GM12878 (cell line): ENCODE measurements at regions of chr1 and their contacts with region 1.

Region 1: DNA sequence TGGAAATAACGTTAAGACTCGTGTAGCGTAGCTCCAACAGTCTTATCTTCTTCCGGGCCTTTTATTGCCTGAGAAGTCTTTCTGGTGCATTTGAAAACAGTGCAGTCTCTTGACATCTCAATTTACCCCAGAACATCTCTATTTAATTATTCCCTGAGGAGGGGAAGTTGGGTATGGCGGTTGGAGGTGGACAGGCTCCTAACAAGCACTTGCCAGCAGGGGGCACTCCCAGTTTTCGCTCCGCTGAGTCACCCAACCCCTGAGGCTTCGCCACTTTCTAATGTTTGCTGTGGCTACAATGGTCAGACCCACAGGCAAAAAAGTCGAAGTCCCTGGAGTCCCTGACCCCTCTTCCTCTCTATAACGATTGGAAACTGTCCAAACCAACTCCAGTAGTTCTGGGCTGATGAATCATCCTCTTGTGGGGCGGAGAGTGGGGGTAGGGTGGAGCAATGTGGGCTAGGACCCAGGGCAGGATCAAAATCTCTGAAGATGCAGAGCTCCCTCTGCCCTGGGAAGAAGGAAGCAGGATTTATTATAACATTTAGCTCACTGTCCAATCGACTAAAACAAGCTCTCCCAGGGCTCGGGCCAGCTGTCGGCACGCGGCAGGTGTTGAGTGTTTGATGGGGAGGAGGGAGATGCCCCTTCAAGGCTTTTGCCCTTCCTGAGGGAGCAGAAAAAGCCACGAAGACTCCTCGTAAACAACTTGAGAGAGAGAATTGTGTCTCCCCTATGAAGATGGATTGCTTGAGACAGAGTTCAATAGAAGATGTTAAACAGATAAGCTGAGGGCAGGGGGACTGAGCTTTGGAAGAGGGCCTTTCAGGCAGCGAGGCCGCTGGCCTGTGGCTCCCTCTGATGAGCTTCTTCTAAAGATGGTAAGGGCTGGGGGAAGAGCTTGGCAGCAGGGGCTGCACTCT is 85.7 kb downstream of the BRINP2 start:
- DNase-seq: no peak
- ATAC-seq: peak; percentile 84
- H3K4me3 ChIP-seq: no peak overlapping the region
- H3K27ac ChIP-seq: no peak overlapping the region
- H3K4me1 ChIP-seq: no peaks in the 10 kb centered on the region
- H3K27me3 ChIP-seq: no peaks in the 10 kb centered on the region
- CTCF ChIP-seq: peak; percentile 40 to 55 (median 41); a peak in 5 of 6 replicates
- EP300 ChIP-seq: no peak
- POLR2A ChIP-seq: no peak
- RAD21 ChIP-seq: peak; percentile 42

Region 2: DNA sequence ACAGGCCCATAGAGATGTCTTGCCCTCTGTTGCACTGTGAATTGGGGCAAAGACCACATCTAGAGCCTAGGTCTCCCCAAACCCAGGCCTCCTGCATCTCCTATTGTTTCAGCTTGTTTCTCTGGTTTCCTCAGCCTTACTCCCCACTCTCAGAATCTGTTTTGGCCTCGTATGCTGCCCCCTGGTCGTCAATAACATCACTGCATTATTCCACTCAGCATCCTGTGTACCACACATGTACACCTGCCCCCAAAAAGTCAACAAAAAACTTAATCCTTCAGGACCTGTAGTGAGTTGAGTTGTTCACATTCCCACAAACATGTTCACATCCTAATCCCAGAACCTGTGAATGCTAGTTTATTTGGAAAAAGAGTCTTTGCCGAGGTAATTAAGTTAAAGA is 99.2 kb after region 1 on chr1:
- CTCF ChIA-PET with region 1: interaction called, 17 read pairs
- POLR2A ChIA-PET with region 1: no interaction called
- RAD21 ChIA-PET with region 1: interaction called, 11 read pairs
- SMC1A ChIA-PET with region 1: interaction called, 3 read pairs
- in situ Hi-C with region 1: no loop called
- intact Hi-C with region 1: no loop called
- DNase-seq: no peak
- ATAC-seq: peak; percentile 80
- H3K4me3 ChIP-seq: no peak overlapping the region
- H3K27ac ChIP-seq: no peak overlapping the region
- H3K4me1 ChIP-seq: no peaks in the 10 kb centered on the region
- H3K27me3 ChIP-seq: no peaks in the 10 kb centered on the region
- CTCF ChIP-seq: peak; percentile 28 to 37 (median 32); a peak in 4 of 6 replicates
- EP300 ChIP-seq: no peak
- POLR2A ChIP-seq: no peak
- RAD21 ChIP-seq: peak; percentile 38; the same call in 1 of the 2 replicates

Region 3: DNA sequence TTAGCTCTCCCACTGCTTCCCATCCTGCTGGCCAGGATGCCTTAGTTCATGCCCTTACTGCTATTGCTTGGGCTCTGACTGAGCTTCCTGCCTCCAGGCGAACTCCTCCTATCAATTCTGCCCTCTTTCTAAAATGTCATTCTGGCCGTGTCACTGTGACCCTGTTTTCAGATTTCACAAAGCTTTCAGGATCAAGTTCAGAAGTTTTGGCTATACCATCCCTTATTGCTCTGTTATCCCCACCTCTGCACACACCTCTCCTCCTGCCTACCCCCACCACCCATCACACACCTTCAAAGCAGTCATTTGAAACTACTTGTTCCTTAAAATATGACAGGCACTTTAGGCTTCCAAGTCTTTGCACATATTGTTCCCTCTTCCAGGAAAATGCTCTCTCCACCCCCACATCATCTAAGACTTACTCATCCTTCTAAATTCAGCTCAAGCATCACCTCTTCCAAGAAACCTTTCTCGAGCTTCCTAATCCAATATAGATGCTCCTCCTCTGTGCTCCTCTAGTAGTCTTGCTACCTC is 192.4 kb after region 1 on chr1:
- CTCF ChIA-PET with region 1: no interaction called
- POLR2A ChIA-PET with region 1: no interaction called
- RAD21 ChIA-PET with region 1: no interaction called
- SMC1A ChIA-PET with region 1: no interaction called
- in situ Hi-C with region 1: no loop called
- intact Hi-C with region 1: no loop called
- DNase-seq: no peak
- ATAC-seq: no peak
- H3K4me3 ChIP-seq: no peak overlapping the region
- H3K27ac ChIP-seq: no peak overlapping the region
- H3K4me1 ChIP-seq: no peaks in the 10 kb centered on the region
- H3K27me3 ChIP-seq: no peaks in the 10 kb centered on the region
- CTCF ChIP-seq: no peak
- EP300 ChIP-seq: no peak
- POLR2A ChIP-seq: no peak
- RAD21 ChIP-seq: no peak

Region 4: DNA sequence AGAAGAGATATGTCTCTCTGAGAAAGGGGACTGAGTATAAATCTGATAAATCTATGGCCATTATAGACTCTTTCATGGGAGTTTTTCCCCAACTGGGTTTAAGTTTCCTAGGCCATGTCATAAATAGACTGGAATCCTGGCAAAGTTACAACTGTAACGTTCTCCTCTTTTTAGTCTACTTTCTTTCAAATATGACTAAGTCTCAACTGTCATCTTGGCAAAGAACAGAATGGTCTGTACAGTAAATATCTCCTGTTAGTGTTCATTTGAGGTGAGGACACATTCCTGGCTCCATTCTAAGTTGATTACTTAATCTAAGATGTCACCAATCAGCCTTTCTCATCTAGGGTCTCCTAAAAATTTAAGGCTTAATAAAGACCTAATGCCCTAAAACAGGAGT is 214.8 kb after region 1 on chr1:
- CTCF ChIA-PET with region 1: no interaction called
- POLR2A ChIA-PET with region 1: no interaction called
- RAD21 ChIA-PET with region 1: no interaction called
- SMC1A ChIA-PET with region 1: no interaction called
- in situ Hi-C with region 1: no loop called
- intact Hi-C with region 1: no loop called
- DNase-seq: no peak
- ATAC-seq: no peak
- H3K4me3 ChIP-seq: no peak overlapping the region
- H3K27ac ChIP-seq: no peak overlapping the region
- H3K4me1 ChIP-seq: no peaks in the 10 kb centered on the region
- H3K27me3 ChIP-seq: no peaks in the 10 kb centered on the region
- CTCF ChIP-seq: no peak
- EP300 ChIP-seq: no peak
- POLR2A ChIP-seq: no peak
- RAD21 ChIP-seq: no peak